Esophagus squamous epithelium (tissue), 5 donors: ENCODE measurements at regions of chr5 and their contacts with region 1.

Region 1: DNA sequence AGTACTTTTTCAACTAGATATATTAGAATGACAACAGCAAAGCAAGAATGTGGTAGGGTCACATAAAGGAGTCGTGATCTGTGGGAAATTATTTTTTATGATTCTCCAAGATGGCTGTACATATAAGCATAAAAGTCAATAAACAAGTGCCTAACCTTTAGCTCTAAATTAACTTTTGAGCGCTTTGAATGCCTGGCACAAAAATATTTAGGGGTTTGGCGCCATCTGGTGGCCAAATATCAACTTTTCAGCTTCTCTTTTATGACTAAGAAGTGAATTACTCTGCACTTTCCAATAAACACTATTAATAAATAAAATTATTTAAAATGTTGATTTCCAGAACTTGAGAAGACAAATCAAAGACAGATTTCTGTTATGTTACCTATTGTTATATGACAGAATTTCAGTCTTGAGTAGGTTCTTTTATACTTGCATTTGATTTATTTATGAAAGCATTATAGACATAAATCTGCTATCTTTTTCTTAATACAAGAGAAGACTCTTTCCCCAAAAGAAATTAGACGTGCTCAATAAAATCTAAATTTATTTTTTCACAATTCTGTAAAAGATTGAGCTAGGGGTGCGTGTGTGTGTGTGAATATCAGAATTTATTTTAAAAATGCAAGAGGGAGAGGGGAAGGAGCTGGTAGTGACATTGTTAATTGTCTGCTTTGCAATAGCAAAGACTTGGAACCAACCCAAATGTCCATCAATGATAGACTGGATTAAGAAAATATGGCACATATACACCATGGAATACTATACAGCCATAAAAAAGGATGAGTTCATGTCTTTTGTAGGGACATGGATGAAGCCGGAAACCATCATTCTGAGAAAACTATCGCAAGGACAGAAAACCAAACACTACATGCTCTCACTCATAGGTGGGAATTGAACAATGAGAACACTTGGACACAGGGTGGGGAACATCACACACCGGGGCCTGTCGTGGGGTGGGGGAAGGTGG is 36.7 kb upstream of the ARRDC3 start:
- DNase-seq: no peak
- H3K4me3 ChIP-seq: no peak overlapping the region
- H3K27ac ChIP-seq: no peak overlapping the region
- H3K4me1 ChIP-seq: peaks cover 0 to 5% (median 0%) of the 10 kb centered on the region in 3 donors
- H3K27me3 ChIP-seq: no peaks in the 10 kb centered on the region
- CTCF ChIP-seq: peak; percentile 43 to 82 (median 72)
- POLR2A ChIP-seq: no peak

Region 2: GRCh38 chr5:90802474-90803317 is 617.2 kb before region 1 on chr5:
- intact Hi-C with region 1: loop called (anchors 5 kb)
- DNase-seq: no peak
- H3K4me3 ChIP-seq: no peak overlapping the region
- H3K27ac ChIP-seq: no peak overlapping the region
- H3K4me1 ChIP-seq: no peaks in the 10 kb centered on the region
- H3K27me3 ChIP-seq: no peaks in the 10 kb centered on the region
- CTCF ChIP-seq: peak in 5 of 6 experiments; percentile 45 to 66 (median 53)
- POLR2A ChIP-seq: no peak

Region 3: DNA sequence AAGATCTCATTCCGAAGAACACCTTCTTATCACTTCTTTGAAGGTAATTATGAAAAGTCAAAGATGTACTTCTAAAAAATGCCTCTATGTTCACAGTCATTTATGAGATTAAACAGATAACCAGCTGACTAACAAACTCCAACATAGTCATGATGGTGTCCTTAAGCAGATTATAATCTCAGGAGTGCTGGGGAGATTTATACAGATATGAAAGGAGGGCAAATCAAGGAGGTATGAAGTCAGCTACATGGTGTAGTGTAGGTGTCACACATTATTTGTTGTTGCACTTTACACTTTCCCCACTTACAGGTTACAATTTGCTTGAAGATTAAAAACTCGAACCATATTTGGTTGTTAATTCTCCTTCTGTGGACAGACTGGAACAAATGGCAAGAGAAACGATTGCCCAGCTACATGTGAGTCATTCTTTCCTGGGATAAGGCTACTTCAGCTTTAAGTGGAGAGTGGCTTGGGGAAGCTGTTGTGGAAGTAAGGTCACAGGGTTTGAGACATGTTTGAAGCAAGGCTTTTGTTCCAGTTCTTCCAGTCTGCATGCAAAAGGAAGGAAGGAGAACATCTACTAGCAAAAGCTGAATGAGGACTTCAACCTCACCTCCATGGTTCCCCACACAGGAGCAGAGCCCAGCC is 541.2 kb before region 1 on chr5:
- intact Hi-C with region 1: loop called (anchors 10 kb)
- DNase-seq: no peak
- H3K4me3 ChIP-seq: no peak overlapping the region
- H3K27ac ChIP-seq: peak overlapping the region; percentile 17 to 69 (median 34)
- H3K4me1 ChIP-seq: peaks cover 4 to 71% (median 10%) of the 10 kb centered on the region in 3 donors
- H3K27me3 ChIP-seq: no peaks in the 10 kb centered on the region
- CTCF ChIP-seq: no peak
- POLR2A ChIP-seq: no peak